ENCODE measurements at regions of chr15 and their contacts with region 1.

Region 1: DNA sequence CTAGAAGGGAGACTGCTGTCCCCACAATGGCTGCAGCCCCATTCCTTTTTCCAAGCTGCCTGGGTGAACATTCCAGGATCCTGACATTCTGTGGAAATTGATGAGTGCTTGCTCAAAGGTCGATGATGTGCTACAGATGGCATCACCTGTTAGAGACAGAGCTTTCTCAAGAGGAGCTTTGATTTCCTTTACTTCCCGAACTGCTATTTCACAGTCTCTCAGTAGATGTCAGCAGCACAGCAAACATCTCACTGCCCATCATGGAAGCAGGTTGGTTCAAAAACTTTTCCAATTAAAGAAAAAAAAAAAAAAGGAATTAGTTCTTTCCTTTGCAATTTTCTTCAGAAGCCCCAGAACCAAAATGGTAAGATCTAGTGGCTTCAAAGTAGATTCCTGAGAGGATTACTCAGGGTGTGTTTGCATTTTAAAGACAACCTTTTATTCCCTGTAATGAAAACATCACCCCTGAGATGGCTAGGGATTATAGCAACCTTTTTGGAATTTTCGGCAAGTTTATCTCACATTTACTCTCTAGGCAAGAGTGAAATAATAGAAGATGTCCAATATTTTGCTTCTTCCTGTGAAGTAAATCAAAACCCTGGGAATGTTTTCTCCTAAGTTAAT is 44.8 kb downstream of the POLR2M start:
- DNase-seq: peak; percentile 43
- H3K4me3 ChIP-seq: no peak overlapping the region
- H3K27ac ChIP-seq: no peak overlapping the region
- H3K4me1 ChIP-seq: no peaks in the 10 kb centered on the region
- H3K27me3 ChIP-seq: no peaks in the 10 kb centered on the region
- CTCF ChIP-seq: peak; percentile 69

Region 2: GRCh38 chr15:57849317-57849716 is 98.0 kb after region 1 on chr15:
- CTCF ChIA-PET with region 1: interaction called, 11 read pairs
- POLR2A ChIA-PET with region 1: no interaction called
- intact Hi-C with region 1: no loop called
- DNase-seq: no peak
- H3K4me3 ChIP-seq: no peak overlapping the region
- H3K27ac ChIP-seq: no peak overlapping the region
- H3K4me1 ChIP-seq: no peaks in the 10 kb centered on the region
- H3K27me3 ChIP-seq: no peaks in the 10 kb centered on the region
- CTCF ChIP-seq: no peak

Region 3: DNA sequence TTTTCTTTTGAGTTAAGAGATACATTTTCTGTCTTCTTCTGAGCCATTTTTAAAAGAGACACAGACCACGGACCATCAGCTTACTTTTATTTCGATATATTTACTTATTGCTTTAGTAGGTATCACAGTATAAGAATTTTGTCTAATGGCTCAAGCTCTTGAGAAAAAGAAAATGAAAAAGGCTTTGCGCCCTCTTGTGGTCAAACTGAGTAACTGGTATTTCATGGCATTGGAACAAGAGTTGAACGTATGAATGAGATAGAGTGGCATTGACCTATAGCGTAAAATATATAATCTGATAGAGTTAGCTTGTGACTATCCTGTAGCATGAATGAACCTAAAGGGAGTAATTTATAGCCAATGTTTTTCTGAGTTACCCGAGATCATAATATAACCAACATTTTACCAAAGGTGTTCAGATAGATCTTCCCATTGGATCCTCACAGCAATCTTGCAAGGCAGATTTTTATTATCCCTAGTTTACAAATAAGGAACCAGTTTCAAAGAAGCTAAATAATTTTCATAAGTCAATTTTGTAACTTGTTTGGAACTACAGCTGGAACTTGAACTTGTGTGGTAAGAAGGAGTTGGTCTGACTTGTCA is 109.8 kb after region 1 on chr15:
- CTCF ChIA-PET with region 1: interaction called, 85 read pairs
- POLR2A ChIA-PET with region 1: no interaction called
- intact Hi-C with region 1: loop called (anchors 2 kb)
- DNase-seq: peak; percentile 75
- H3K4me3 ChIP-seq: no peak overlapping the region
- H3K27ac ChIP-seq: no peak overlapping the region
- H3K4me1 ChIP-seq: no peaks in the 10 kb centered on the region
- H3K27me3 ChIP-seq: no peaks in the 10 kb centered on the region
- CTCF ChIP-seq: peak; percentile 85

Region 4: GRCh38 chr15:58044551-58044950 is 293.3 kb after region 1 on chr15:
- CTCF ChIA-PET with region 1: no interaction called
- POLR2A ChIA-PET with region 1: interaction called, 10 read pairs
- intact Hi-C with region 1: no loop called
- DNase-seq: no peak
- H3K4me3 ChIP-seq: no peak overlapping the region
- H3K27ac ChIP-seq: no peak overlapping the region
- H3K4me1 ChIP-seq: no peaks in the 10 kb centered on the region
- H3K27me3 ChIP-seq: peaks cover 4% of the 10 kb centered on the region
- CTCF ChIP-seq: no peak